ENCODE measurements at regions of chr10 and their contacts with region 1.

Region 1: DNA sequence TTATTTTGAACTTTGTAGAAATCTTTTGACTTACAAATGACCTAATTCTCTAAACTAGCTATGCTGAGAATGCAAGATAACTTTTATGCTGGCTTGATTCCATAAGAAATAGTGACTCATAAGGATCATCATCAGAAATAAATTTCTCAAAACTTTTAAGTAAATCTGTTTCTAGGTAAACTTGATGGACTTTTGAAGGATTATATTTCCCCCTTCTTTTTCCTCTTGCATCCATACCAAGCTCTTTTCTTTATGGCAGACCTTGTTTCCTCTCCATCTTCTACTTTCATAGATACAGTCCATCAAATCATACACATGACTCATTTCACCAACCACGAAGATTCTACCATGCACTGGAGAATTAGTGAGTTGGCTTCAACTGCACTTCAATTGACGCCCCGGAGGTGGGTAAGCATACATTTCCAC is 336.3 kb downstream of the KCNMA1 start:
- DNase-seq: peak; percentile 82
- ATAC-seq: peak; percentile 60
- H3K4me3 ChIP-seq: no peak overlapping the region
- H3K27ac ChIP-seq: no peak overlapping the region
- H3K4me1 ChIP-seq: peaks cover 15% of the 10 kb centered on the region
- H3K27me3 ChIP-seq: no peaks in the 10 kb centered on the region
- CTCF ChIP-seq: no peak
- POLR2A ChIP-seq: no peak
- RAD21 ChIP-seq: no peak

Region 2: DNA sequence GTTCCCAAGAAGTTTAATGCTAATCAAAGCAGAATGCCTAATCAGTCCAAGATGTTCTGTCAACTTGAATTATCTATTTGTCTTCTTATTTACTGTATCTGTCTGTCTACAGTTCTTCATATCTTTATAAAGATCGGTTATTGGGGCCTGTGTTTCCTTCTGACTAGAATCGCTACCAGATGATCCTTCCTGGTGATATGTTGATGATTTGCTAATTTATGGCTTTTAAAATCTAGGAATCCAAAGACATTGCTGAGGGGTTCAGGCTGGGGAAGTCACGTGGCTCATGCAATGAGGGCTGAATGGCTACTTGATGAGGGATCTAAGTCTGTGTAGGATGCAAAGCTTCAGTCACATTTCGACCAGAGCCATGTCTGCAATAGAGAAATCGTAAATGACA is 200.0 kb before region 1 on chr10:
- CTCF ChIA-PET with region 1: no interaction called
- POLR2A ChIA-PET with region 1: no interaction called
- dilution Hi-C with region 1: no loop called
- in situ Hi-C with region 1: no loop called
- intact Hi-C with region 1: no loop called
- DNase-seq: no peak
- ATAC-seq: no peak
- H3K4me3 ChIP-seq: no peak overlapping the region
- H3K27ac ChIP-seq: no peak overlapping the region
- H3K4me1 ChIP-seq: peaks cover 17% of the 10 kb centered on the region
- H3K27me3 ChIP-seq: no peaks in the 10 kb centered on the region
- CTCF ChIP-seq: no peak
- POLR2A ChIP-seq: no peak
- RAD21 ChIP-seq: no peak

Region 3: DNA sequence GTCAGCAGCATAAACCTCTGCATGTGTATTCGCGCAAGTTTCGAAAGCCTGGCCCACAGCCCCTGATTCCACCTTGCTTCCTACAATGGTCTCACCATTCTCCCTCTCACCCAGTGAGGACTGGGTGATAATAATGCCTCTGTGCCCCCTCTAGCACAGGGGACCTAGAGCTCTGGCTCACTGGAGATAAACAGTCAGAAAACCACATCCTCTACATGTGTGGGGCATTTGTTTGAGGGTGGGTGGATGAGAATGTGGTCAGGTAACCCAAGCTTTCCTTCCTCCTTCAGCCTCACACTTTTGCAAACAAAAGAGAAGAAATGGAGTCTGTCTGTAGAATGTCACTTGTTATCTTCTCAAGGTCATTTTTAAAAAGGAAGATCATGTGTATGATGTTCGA is 37.2 kb before region 1 on chr10:
- CTCF ChIA-PET with region 1: no interaction called
- POLR2A ChIA-PET with region 1: no interaction called
- dilution Hi-C with region 1: no loop called
- in situ Hi-C with region 1: no loop called
- intact Hi-C with region 1: loop called (anchors 5 kb)
- DNase-seq: no peak
- ATAC-seq: no peak
- H3K4me3 ChIP-seq: no peak overlapping the region
- H3K27ac ChIP-seq: no peak overlapping the region
- H3K4me1 ChIP-seq: peaks cover 4% of the 10 kb centered on the region; the same call in 1 of the 2 replicates
- H3K27me3 ChIP-seq: no peaks in the 10 kb centered on the region; the same call in 1 of the 2 replicates
- CTCF ChIP-seq: no peak
- POLR2A ChIP-seq: no peak
- RAD21 ChIP-seq: no peak

Region 4: DNA sequence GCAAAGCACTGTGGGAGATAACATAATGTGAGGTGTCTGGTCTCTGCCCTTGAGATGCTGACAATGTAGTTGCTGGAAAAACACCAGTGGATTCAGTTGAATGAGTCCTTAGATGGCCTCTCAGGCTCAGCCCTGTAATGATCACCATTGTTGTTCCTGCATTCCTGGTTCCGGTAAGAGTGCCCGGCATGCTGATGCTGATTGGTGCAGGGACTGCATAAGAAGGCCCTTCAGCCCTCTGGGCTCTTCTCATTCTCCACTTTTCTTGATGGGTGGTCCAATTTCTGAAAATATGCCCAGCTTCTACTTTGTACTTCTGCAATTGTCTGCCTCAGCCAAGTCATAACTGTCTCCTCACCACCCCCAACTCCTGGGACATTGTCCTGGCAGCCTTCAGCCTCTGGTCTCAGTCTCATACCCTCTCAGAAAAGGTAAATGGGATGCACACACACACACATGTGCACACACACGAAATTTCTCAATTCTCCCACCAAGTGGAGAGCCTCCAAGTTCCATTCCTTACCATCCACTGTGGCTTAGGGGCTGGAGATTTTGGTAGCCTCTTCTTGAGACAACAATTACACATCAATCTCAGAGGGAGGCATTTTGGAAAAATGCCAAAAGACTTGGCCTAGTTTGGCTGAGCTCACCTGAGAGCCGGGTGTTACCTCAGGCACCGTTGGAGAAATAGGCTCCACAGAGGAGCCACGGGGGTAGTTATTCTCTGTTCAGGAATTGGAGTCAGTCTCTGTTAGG is 1047.3 kb after region 1 on chr10:
- CTCF ChIA-PET with region 1: no interaction called
- POLR2A ChIA-PET with region 1: no interaction called
- dilution Hi-C with region 1: no loop called
- in situ Hi-C with region 1: no loop called
- intact Hi-C with region 1: no loop called
- DNase-seq: no peak
- ATAC-seq: no peak
- H3K4me3 ChIP-seq: no peak overlapping the region
- H3K27ac ChIP-seq: no peak overlapping the region
- H3K4me1 ChIP-seq: no peaks in the 10 kb centered on the region
- H3K27me3 ChIP-seq: peaks cover 42% of the 10 kb centered on the region
- CTCF ChIP-seq: no peak
- POLR2A ChIP-seq: no peak
- RAD21 ChIP-seq: no peak

Measured in IMR-90 (cell line).